Aorta (tissue), 5 donors: ENCODE measurements at regions of chr4 and their contacts with region 1.

Region 1: DNA sequence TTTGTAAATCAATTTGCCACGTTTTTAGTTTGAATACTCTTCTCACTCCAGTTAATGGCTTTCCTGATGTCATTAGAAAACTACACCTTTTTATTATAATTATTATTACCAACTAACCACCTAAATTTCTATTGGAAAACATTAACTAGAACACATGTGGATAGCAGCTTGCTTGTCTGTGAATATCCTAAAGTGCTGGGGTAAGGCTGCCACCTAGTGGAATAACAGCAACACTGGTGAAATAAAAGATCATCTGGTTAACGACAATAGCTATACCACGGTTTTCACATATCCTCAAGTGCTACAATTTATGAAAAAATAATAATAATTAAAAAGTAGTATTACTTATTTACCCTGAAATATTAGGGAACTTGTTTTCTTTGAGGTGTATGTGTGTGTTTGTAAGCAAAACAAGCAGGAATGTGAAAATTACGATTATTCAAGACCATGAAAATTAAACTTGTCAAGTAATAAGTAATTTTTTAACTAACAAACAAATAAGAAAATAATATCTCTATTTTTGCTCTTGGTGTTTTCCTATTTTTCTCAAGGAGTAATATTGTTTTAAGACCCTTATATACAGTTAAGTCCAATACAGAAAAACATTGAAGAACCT is 130.1 kb upstream of the TECRL start:
- DNase-seq: no peak
- ATAC-seq: peak; percentile 73
- H3K4me3 ChIP-seq: no peak overlapping the region
- H3K27ac ChIP-seq: no peak overlapping the region
- H3K4me1 ChIP-seq: no peaks in the 10 kb centered on the region
- H3K27me3 ChIP-seq: no peaks in the 10 kb centered on the region

Region 2: GRCh38 chr4:64158648-64159326 is 380.6 kb before region 1 on chr4:
- intact Hi-C with region 1: loop called (anchors 5 to 10 kb)
- DNase-seq: peak in 1 of 2 donors; percentile 36
- ATAC-seq: no peak
- H3K4me3 ChIP-seq: no peak overlapping the region
- H3K27ac ChIP-seq: no peak overlapping the region
- H3K4me1 ChIP-seq: no peaks in the 10 kb centered on the region
- H3K27me3 ChIP-seq: no peaks in the 10 kb centered on the region